Cardiac septum (tissue), 1 donor: ENCODE measurements at regions of chr10 and their contacts with region 1.

Region 1: GRCh38 chr10:68406815-68407548 is at the start of gene RUFY2:
- DNase-seq: peak; percentile 92
- total RNA-seq, gene RUFY2: 12.0 TPM

Region 2: DNA sequence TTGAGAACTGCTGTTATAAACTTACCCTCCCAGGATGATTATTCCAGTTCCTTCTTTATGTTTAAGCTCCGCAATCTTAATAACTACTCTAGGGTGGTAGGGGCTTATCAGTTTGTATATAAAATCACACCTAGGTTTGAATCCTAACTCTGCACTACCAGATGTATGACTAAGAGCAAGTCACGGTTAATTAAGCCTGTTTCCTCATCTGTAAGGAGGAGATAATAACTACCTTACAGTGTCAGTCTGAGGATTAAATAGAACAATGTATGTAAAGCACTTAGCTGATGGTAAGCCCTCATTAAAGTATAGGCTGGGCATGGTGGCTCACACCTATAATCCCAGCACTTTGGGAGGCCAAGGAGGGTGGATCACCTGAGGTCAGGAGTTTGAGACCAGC is 55.6 kb after region 1 on chr10:
- intact Hi-C with region 1: loop called (anchors 10 kb)
- DNase-seq: no peak